Calu3 (cell line): ENCODE measurements at regions of chr3 and their contacts with region 1.

Region 1: DNA sequence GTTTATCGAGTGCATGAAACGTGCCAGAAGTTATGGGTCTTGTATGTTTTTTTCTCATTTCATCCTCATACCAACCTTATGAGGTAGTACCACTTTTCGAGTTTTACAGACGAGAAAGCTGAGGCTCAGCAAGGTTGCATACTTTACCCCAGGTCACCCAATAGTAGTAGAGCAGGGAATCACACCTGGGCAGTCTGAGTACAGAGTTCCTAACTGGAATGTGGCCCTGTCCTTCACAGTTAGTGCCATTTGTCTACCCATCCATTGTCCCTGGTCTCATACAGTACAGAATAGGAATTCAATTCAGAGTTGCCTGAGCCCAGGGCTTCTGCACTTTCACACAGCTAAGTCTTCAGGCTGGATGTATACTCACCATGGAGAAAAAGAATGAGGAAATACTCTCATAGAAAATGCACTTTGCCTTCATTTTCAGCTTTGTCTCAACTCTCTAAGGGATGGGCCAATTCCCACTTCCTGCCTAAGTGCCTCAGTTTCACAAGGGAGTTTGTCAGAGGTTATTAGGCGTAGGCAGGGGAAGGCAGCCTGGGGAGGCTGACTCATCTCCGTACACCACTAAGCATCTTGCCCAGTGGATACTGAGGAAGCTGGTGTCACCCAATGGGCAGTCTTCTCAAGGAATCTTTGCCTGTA is 93.2 kb downstream of the TMEM212 start:
- DNase-seq: peak; percentile 84
- H3K4me3 Mint-ChIP-seq: peak overlapping the region; percentile 50
- H3K27ac Mint-ChIP-seq: peak overlapping the region; percentile 73
- H3K4me1 Mint-ChIP-seq: peaks cover 91% of the 10 kb centered on the region
- H3K27me3 Mint-ChIP-seq: no peaks in the 10 kb centered on the region
- CTCF ChIP-seq: no peak

Region 2: DNA sequence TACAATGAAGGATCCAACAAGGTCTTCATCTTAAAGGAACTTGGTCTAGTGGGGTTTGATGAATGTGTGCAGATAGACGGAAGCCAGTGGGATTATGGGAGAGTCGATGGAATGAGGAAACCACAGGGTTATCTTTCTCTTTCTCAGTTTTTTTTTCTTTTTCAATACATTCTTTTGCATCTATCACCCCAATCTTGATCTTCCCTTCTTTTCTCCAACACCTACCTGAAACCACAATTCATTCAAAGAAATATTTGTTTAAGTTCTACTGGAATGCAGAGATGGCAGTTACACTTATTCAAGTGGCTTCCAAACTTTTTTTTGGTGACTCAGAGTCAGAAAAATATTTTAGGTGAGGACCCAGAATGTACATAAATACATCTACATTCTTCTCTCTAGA is 91.4 kb before region 1 on chr3:
- CTCF ChIA-PET with region 1: interaction called, 3 read pairs
- intact Hi-C with region 1: loop called (anchors 1 kb)
- DNase-seq: no peak
- H3K4me3 Mint-ChIP-seq: no peak overlapping the region
- H3K27ac Mint-ChIP-seq: peak overlapping the region; percentile 31
- H3K4me1 Mint-ChIP-seq: peaks cover 63% of the 10 kb centered on the region
- H3K27me3 Mint-ChIP-seq: no peaks in the 10 kb centered on the region
- CTCF ChIP-seq: no peak

Region 3: DNA sequence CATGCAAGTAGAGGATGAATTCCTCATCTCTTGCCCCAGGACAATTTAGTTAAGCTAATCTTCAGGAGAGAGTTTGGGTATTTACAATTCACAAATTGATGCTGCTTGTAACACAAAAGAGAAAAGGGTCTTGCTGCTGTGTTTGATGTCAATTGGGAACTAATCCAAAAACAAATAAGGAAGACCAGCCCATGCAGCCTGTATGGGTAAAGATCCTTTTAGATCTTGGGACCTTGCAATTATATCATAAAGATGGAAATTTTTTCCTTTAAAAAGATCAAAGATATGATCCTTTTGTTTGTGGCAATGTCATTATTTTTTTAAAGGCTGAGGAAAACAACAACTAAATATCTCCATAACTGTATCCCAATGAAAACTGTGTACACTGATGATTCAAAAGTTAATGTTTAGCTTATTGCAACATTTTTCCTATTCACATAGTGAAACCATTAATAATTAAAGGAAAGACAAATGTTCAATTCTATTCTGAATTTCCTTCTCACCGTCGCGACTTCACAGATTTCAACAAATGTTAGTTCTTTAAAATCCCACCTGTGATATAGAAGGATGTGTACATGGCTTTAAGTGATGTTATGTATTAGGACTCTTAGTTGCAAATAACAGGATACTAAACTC is 52.9 kb before region 1 on chr3:
- CTCF ChIA-PET with region 1: interaction called, 13 read pairs
- intact Hi-C with region 1: loop called (anchors 2 kb)
- DNase-seq: no peak
- H3K4me3 Mint-ChIP-seq: peak overlapping the region; percentile 7
- H3K27ac Mint-ChIP-seq: peak overlapping the region; percentile 72
- H3K4me1 Mint-ChIP-seq: peaks cover 73% of the 10 kb centered on the region
- H3K27me3 Mint-ChIP-seq: no peaks in the 10 kb centered on the region
- CTCF ChIP-seq: no peak